ENCODE measurements at regions of chrX and their contacts with region 1.

Region 1: GRCh38 chrX:17374619-17375366 is at the start of gene NHS:
- ATAC-seq: peak; percentile 72 to 84 (median 76)
- H3K4me3 ChIP-seq: peak within 1 kb of the TSS; percentile 43 to 76 (median 57)
- H3K27ac ChIP-seq: peak within 1 kb of the TSS; percentile 6 to 32
- H3K4me1 ChIP-seq: peaks cover 0 to 3% of the 10 kb centered on the region in 2 donors
- total RNA-seq, gene NHS: 0.21 to 19.5 (median 7.0) TPM

Region 2: DNA sequence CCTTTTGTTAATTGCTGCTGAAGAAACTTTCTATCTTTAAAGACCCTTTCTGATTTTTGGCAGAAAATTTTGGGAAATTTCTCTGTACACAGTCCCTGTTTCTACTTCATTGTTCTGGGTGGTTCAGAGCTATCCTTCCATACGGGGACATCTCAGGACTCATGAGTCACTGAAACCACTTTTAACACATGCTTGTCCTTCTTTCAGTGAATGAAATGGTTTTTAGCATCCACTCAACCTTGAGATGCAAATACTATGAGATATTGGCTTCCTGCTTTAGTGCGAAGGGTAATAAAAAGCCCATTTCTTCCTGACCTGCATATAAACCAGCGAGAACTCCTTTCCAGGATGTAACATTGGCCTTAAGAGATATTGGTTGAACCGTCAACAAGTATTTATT is 270.4 kb before region 1 on chrX:
- in situ Hi-C with region 1: loop called in 1 of 9 experiments (anchors 25 kb)
- ATAC-seq: peak in 1 of 8 experiments; percentile 43
- H3K4me3 ChIP-seq: no peak overlapping the region
- H3K27ac ChIP-seq: no peak overlapping the region
- H3K4me1 ChIP-seq: no peaks in the 10 kb centered on the region

Region 3: GRCh38 chrX:17242470-17242869 is 132.3 kb before region 1 on chrX:
- in situ Hi-C with region 1: loop called in 1 of 9 experiments (anchors 25 kb)
- ATAC-seq: peak; percentile 32 to 71 (median 55)
- H3K4me3 ChIP-seq: no peak overlapping the region
- H3K27ac ChIP-seq: no peak overlapping the region
- H3K4me1 ChIP-seq: no peaks in the 10 kb centered on the region

Region 4: DNA sequence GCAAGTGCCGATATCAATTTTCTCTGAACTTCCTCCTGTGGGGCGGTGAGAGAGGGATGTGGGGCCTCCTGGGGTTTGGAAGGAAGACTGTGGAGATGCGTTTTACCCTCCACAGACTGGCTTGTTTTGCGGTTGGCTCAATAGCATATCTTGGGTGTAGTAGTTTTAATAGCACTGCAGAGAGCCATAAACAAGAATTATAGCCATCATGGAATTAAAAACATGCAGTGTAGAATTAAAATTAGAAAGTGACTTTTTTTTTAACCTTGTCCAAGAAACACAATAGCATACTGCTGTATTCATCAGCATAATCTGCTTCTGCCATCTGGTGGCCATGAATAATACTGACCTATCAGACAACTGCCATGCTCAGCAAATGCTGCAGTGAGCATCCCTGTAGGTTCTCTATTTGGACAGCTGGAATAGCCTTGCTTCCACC is 315.2 kb after region 1 on chrX:
- in situ Hi-C with region 1: loop called in 1 of 9 experiments (anchors 25 kb)
- ATAC-seq: peak; percentile 83 to 98 (median 97)
- H3K4me3 ChIP-seq: no peak overlapping the region
- H3K27ac ChIP-seq: no peak overlapping the region
- H3K4me1 ChIP-seq: peaks cover 15 to 19% of the 10 kb centered on the region in 2 donors